ENCODE measurements at regions of chr7 and their contacts with region 1.

Region 1: GRCh38 chr7:82810558-82811259 is 352.0 kb downstream of the PCLO start:
- DNase-seq: peak; percentile 67
- H3K4me3 ChIP-seq: no peak overlapping the region
- H3K27ac ChIP-seq: peak overlapping the region in 1 of 2 experiments; percentile 77; a peak in 1 of 4 replicates
- H3K4me1 ChIP-seq: peaks cover 7 to 22% of the 10 kb centered on the region in 2 experiments; a peak in 3 of 4 replicates
- H3K27me3 ChIP-seq: no peaks in the 10 kb centered on the region
- CTCF ChIP-seq: peak; percentile 98
- EP300 ChIP-seq: peak; percentile 58 to 91; a peak in 3 of 4 replicates
- RAD21 ChIP-seq: peak; percentile 93

Region 2: GRCh38 chr7:82677493-82677892 is 133.2 kb before region 1 on chr7:
- CTCF ChIA-PET with region 1: no interaction called
- POLR2A ChIA-PET with region 1: no interaction called
- DNase-seq: no peak
- H3K4me3 ChIP-seq: no peak overlapping the region
- H3K27ac ChIP-seq: peak overlapping the region in 1 of 2 experiments; percentile 75; a peak in 2 of 4 replicates
- H3K4me1 ChIP-seq: peaks cover 0 to 32% of the 10 kb centered on the region in 2 experiments; a peak in 2 of 4 replicates
- H3K27me3 ChIP-seq: no peaks in the 10 kb centered on the region
- CTCF ChIP-seq: no peak
- EP300 ChIP-seq: no peak
- RAD21 ChIP-seq: no peak

Region 3: GRCh38 chr7:82740246-82740848 is 70.4 kb before region 1 on chr7:
- CTCF ChIA-PET with region 1: interaction called, 13 read pairs
- POLR2A ChIA-PET with region 1: no interaction called
- DNase-seq: peak; percentile 48
- H3K4me3 ChIP-seq: no peak overlapping the region; a peak in 1 of 4 replicates
- H3K27ac ChIP-seq: no peak overlapping the region
- H3K4me1 ChIP-seq: 0 out of 4 replicates have a peak, but pooled peaks cover 0 to 8% of the 10 kb centered on the region in 2 experiments
- H3K27me3 ChIP-seq: no peaks in the 10 kb centered on the region
- CTCF ChIP-seq: peak; percentile 93
- EP300 ChIP-seq: no peak
- RAD21 ChIP-seq: peak; percentile 91

Region 4: DNA sequence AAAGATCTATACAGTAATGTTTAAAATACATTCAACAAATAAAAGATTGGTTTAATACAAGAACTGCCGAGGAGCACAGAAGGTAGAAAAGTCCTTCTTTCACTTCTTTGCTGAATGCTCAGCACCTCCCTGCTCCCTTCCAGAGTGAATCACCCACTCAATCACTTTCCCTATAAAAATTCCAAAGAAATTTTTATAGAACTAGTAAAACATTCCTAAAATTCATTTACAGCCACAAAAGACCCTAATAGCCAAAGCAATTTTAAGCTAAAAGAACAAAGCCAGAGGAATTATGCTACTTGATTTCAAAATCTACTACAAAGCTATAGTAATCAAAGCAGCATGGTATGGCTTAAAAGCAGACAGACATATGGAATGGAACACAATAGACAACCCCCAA is 31.1 kb after region 1 on chr7:
- CTCF ChIA-PET with region 1: interaction called, 13 read pairs
- POLR2A ChIA-PET with region 1: no interaction called
- DNase-seq: no peak
- H3K4me3 ChIP-seq: no peak overlapping the region
- H3K27ac ChIP-seq: no peak overlapping the region
- H3K4me1 ChIP-seq: peaks cover 14 to 28% of the 10 kb centered on the region in 2 experiments; a peak in 3 of 4 replicates
- H3K27me3 ChIP-seq: no peaks in the 10 kb centered on the region
- CTCF ChIP-seq: no peak
- EP300 ChIP-seq: no peak
- RAD21 ChIP-seq: no peak

Region 5: GRCh38 chr7:83153419-83153818 is 342.7 kb after region 1 on chr7:
- CTCF ChIA-PET with region 1: interaction called, 13 read pairs
- POLR2A ChIA-PET with region 1: no interaction called
- DNase-seq: peak; percentile 78
- H3K4me3 ChIP-seq: no peak overlapping the region
- H3K27ac ChIP-seq: peak overlapping the region in 1 of 2 experiments; percentile 86; a peak in 2 of 4 replicates
- H3K4me1 ChIP-seq: peaks cover 0 to 20% of the 10 kb centered on the region in 2 experiments; a peak in 2 of 4 replicates
- H3K27me3 ChIP-seq: no peaks in the 10 kb centered on the region
- CTCF ChIP-seq: no peak
- EP300 ChIP-seq: peak in 1 of 2 experiments; percentile 83; a peak in 2 of 4 replicates
- RAD21 ChIP-seq: peak; percentile 38

Region 6: DNA sequence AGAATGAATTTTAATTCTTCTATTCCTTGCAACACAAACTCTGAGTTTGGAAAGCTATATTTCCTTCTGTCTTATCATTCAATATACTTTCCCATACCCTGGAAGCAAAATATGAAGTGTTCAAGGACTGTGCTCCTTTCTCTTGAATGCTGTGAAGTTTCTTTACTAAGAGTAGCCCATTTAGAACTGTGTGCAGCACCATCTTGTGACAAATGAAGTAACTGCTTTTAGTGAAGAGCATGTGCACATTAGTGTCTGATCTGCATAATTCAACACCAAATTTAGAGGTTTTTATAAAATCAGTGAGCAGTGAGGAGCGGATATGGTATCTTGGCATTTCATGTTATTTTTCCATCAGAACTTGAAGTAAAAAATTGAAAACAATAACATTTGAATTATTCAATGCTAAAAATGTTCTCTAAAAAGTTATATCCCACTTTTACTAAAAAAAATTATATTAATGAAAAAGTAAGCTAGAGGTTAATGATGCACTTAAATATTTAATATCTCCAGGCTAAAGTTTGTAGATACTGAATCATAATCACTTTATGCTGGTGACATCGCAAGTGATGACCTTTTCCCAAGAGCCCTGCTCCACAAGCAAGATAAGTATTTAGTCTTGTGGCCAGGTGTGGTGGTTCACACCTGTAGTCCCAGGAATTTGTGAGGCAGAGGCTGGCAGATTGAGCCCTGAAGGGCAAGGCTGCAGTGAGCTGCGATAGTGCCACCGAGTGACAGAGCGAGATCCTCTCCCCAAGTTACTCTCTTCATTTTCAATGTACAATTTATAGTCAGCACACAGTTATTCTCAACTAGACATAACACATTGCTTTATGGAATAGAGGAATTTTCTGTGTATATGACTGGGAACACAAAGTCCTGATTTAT is 460.7 kb after region 1 on chr7:
- CTCF ChIA-PET with region 1: interaction called, 25 read pairs
- POLR2A ChIA-PET with region 1: no interaction called
- DNase-seq: peak; percentile 40
- H3K4me3 ChIP-seq: no peak overlapping the region
- H3K27ac ChIP-seq: no peak overlapping the region
- H3K4me1 ChIP-seq: no peaks in the 10 kb centered on the region; a peak in 1 of 4 replicates
- H3K27me3 ChIP-seq: no peaks in the 10 kb centered on the region
- CTCF ChIP-seq: peak; percentile 67
- EP300 ChIP-seq: no peak
- RAD21 ChIP-seq: peak; percentile 91

Measured in SK-N-SH (cell line).